ENCODE measurements at regions of chr2 and their contacts with region 1.

Region 1: DNA sequence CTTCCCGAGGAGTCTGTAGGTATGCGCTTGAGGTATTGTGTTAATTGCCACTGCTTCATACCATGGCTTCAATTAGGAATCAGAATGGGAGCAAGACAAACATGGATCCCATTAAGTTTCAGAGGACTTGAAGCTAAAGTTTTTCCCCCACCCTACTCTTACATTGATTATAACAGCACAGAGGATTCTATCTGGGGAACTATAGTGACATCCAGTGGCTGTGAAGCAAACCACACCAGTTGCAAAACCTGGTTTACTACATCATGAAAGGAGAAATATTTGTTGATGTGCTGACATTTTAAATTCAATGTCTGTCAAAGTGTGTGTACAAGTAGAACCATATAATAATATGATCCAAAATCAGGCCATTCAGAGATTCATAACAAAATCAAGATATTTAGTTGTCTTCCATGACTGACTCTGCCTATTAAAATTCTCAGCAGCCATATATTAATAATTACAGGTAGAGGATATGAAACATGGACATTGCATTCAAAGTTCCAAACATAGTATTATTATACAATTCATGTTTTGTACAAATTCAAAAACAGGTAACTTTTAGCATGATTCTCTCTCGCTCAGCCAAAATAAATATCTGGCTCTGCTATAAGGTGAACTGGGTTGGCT is 82.9 kb downstream of the GRB14 start:
- DNase-seq: peak; percentile 62
- H3K4me3 Mint-ChIP-seq: no peak overlapping the region
- H3K27ac Mint-ChIP-seq: no peak overlapping the region
- H3K4me1 Mint-ChIP-seq: peaks cover 12% of the 10 kb centered on the region
- H3K27me3 Mint-ChIP-seq: no peaks in the 10 kb centered on the region
- CTCF ChIP-seq: peak; percentile 82

Region 2: DNA sequence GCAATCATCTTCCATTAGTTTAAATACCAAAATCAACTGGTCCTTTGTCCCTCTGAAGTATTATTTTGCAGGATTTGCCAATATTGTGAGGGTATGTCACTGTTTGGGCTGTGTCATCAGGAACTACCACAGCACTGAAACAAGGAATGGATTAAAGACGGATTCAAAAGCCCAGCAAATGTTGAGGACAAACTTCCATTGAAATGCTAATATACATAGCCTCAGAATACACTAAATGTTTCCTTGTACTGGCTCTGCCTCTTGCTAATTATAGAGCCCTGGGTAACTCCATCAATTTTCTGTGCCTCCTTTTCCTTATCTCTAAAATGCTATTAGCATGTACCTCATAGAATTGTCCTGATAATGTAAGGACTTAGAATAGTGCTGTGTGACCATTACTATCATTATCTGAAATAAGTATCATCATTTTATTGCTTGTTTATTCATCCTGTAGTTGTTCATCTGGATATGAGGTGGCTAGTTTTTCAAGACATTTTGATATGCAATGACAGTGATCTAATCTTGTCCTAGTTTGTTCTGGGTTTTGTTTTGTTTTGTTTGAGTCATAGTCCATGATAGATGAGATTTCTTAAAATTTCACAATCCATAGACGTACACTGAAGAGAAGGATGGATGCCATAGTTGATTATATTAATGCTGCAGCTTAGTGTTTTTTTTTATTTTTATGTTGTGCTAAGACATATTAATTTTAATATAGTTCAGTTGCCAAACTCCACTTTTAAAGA is 1366.4 kb before region 1 on chr2:
- CTCF ChIA-PET with region 1: interaction called, 36 read pairs
- POLR2A ChIA-PET with region 1: no interaction called
- intact Hi-C with region 1: no loop called
- DNase-seq: peak; percentile 51
- H3K4me3 Mint-ChIP-seq: no peak overlapping the region
- H3K27ac Mint-ChIP-seq: peak overlapping the region; percentile 57
- H3K4me1 Mint-ChIP-seq: peaks cover 14% of the 10 kb centered on the region
- H3K27me3 Mint-ChIP-seq: no peaks in the 10 kb centered on the region
- CTCF ChIP-seq: no peak

Region 3: GRCh38 chr2:164388511-164388910 is 149.8 kb before region 1 on chr2:
- CTCF ChIA-PET with region 1: no interaction called
- POLR2A ChIA-PET with region 1: no interaction called
- intact Hi-C with region 1: no loop called
- DNase-seq: peak; percentile 62
- H3K4me3 Mint-ChIP-seq: no peak overlapping the region
- H3K27ac Mint-ChIP-seq: peak overlapping the region; percentile 75
- H3K4me1 Mint-ChIP-seq: peaks cover 17% of the 10 kb centered on the region
- H3K27me3 Mint-ChIP-seq: no peaks in the 10 kb centered on the region
- CTCF ChIP-seq: no peak

Region 4: DNA sequence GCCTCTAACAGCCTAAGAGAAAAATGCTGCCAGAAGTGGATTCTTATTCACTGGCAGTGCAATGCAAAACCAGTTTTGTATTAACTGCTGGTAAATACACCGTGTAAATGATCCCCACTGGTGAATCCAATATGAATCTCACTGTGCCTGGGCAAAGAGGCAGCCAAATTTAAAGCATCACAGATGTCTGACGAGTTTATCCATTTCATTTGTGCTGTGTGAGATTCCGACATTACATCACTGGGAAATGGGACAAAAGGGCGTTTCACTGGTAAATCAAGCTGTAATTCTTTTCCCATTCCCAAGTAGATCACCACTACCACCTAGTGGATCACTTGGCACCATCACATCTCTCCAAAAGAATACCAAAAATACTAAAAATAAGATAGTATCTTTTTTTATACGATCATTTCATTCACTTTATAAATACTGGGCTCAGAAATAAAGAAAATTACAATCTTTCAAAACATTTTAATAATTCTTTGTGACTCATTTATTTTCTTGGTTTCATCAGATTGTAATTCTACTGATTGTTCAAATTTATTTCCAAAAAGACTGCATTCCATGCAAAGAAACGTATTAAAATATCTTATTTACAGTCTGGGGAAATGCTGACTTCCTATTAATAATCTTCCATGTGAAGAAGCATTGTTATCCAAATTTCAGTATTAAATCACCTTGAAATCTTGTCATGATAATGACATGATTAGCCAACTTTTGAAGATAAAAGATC is 42.7 kb before region 1 on chr2:
- CTCF ChIA-PET with region 1: interaction called, 103 read pairs
- POLR2A ChIA-PET with region 1: no interaction called
- intact Hi-C with region 1: loop called (anchors 2 kb)
- DNase-seq: peak; percentile 63
- H3K4me3 Mint-ChIP-seq: no peak overlapping the region
- H3K27ac Mint-ChIP-seq: no peak overlapping the region
- H3K4me1 Mint-ChIP-seq: no peaks in the 10 kb centered on the region
- H3K27me3 Mint-ChIP-seq: no peaks in the 10 kb centered on the region
- CTCF ChIP-seq: peak; percentile 68

Region 5: DNA sequence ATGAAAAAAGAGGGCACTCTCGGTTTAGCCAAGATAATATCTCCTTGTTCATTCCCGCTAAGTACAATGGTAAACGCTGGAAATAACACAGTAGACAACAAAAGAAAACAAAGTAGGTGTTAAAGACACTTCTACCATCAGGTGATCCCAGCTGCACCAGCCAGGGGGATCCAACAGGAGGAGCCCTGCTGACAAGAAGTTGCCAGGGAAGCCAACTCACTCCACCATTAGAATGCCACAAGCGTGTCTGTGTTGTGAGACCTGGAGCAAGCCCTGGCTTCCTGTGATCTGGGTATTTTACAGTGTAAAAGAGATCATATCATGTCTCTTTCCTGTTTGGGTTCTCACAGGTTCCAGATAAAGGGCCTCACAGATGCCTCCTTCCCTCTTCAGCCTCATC is 34.1 kb before region 1 on chr2:
- CTCF ChIA-PET with region 1: interaction called, 103 read pairs
- POLR2A ChIA-PET with region 1: no interaction called
- intact Hi-C with region 1: loop called (anchors 1 kb)
- DNase-seq: peak; percentile 37
- H3K4me3 Mint-ChIP-seq: no peak overlapping the region
- H3K27ac Mint-ChIP-seq: no peak overlapping the region
- H3K4me1 Mint-ChIP-seq: no peaks in the 10 kb centered on the region
- H3K27me3 Mint-ChIP-seq: no peaks in the 10 kb centered on the region
- CTCF ChIP-seq: peak; percentile 10

Region 6: DNA sequence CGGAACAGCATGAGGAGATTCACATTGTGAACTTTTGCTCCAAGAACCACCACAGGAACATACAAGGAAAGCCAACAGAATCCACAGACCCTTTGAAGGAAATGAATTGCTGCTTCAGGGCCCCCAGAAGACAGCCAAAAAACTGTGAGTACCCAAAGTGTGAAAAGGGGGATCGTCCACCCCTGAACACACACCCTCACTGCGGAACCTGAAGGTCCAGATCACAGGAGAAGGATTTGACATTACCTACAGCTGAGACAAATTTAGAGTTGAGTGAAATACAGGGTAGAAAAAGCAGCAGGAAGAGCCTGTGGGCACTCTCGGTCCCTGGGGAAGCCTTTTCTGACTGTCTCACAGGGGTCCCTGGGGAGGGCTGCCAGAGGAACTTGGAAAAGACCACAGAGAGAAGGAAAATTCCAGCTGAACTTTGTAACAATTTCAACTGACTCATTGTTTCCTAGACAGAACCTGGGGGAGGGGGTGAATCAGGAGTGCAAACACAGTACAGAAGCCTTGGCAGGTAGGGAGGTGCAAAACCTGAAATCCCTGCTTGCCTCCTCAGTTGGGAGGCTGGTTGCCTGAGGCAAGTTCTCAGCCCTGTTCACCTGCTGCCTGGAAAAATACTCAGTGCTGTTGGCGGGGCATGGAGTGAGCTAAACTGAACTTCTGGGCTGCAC is 24.0 kb before region 1 on chr2:
- CTCF ChIA-PET with region 1: interaction called, 10 read pairs
- POLR2A ChIA-PET with region 1: no interaction called
- intact Hi-C with region 1: no loop called
- DNase-seq: peak; percentile 86
- H3K4me3 Mint-ChIP-seq: no peak overlapping the region
- H3K27ac Mint-ChIP-seq: peak overlapping the region; percentile 53
- H3K4me1 Mint-ChIP-seq: peaks cover 15% of the 10 kb centered on the region
- H3K27me3 Mint-ChIP-seq: no peaks in the 10 kb centered on the region
- CTCF ChIP-seq: no peak

Region 7: GRCh38 chr2:165450156-165450555 is 911.8 kb after region 1 on chr2:
- CTCF ChIA-PET with region 1: no interaction called
- POLR2A ChIA-PET with region 1: no interaction called
- intact Hi-C with region 1: no loop called
- DNase-seq: no peak
- H3K4me3 Mint-ChIP-seq: no peak overlapping the region
- H3K27ac Mint-ChIP-seq: no peak overlapping the region
- H3K4me1 Mint-ChIP-seq: no peaks in the 10 kb centered on the region
- H3K27me3 Mint-ChIP-seq: peaks cover 48% of the 10 kb centered on the region
- CTCF ChIP-seq: no peak

Measured in MCF 10A (cell line).